GM12878 (cell line): ENCODE measurements at regions of chr10 and their contacts with region 1.

Region 1: GRCh38 chr10:48289501-48290238 is 15.2 kb upstream of the FRMPD2 start:
- DNase-seq: no peak
- ATAC-seq: peak; percentile 60
- H3K4me3 ChIP-seq: no peak overlapping the region
- H3K27ac ChIP-seq: no peak overlapping the region
- H3K4me1 ChIP-seq: peaks cover 34% of the 10 kb centered on the region
- H3K27me3 ChIP-seq: no peaks in the 10 kb centered on the region
- CTCF ChIP-seq: peak; percentile 80 to 91 (median 86)
- EP300 ChIP-seq: no peak
- POLR2A ChIP-seq: no peak
- RAD21 ChIP-seq: peak; percentile 86

Region 2: GRCh38 chr10:48215488-48216204 is 74.0 kb before region 1 on chr10:
- CTCF ChIA-PET with region 1: interaction called, 78 read pairs
- POLR2A ChIA-PET with region 1: interaction called, 5 read pairs
- RAD21 ChIA-PET with region 1: interaction called, 45 read pairs
- SMC1A ChIA-PET with region 1: interaction called, 49 read pairs
- in situ Hi-C with region 1: no loop called
- intact Hi-C with region 1: loop called (anchors 1 kb)
- DNase-seq: peak; percentile 49
- ATAC-seq: peak; percentile 94
- H3K4me3 ChIP-seq: no peak overlapping the region
- H3K27ac ChIP-seq: no peak overlapping the region
- H3K4me1 ChIP-seq: no peaks in the 10 kb centered on the region
- H3K27me3 ChIP-seq: no peaks in the 10 kb centered on the region
- CTCF ChIP-seq: peak; percentile 50 to 81 (median 78)
- EP300 ChIP-seq: no peak
- POLR2A ChIP-seq: no peak
- RAD21 ChIP-seq: peak; percentile 83

Region 3: GRCh38 chr10:48231699-48232315 is 57.9 kb before region 1 on chr10:
- CTCF ChIA-PET with region 1: interaction called, 9 read pairs
- POLR2A ChIA-PET with region 1: interaction called, 7 read pairs
- RAD21 ChIA-PET with region 1: interaction called, 11 read pairs
- SMC1A ChIA-PET with region 1: interaction called, 7 read pairs
- in situ Hi-C with region 1: no loop called
- intact Hi-C with region 1: no loop called
- DNase-seq: peak; percentile 64
- ATAC-seq: peak; percentile 89
- H3K4me3 ChIP-seq: 0 out of 2 replicates have a peak overlapping the region, but pooled peaks have one; percentile 25
- H3K27ac ChIP-seq: no peak overlapping the region
- H3K4me1 ChIP-seq: peaks cover 16% of the 10 kb centered on the region
- H3K27me3 ChIP-seq: no peaks in the 10 kb centered on the region
- CTCF ChIP-seq: no peak
- EP300 ChIP-seq: peak in 1 of 2 experiments; percentile 25; a peak in 1 of 4 replicates
- POLR2A ChIP-seq: no peak
- RAD21 ChIP-seq: no peak

Region 4: DNA sequence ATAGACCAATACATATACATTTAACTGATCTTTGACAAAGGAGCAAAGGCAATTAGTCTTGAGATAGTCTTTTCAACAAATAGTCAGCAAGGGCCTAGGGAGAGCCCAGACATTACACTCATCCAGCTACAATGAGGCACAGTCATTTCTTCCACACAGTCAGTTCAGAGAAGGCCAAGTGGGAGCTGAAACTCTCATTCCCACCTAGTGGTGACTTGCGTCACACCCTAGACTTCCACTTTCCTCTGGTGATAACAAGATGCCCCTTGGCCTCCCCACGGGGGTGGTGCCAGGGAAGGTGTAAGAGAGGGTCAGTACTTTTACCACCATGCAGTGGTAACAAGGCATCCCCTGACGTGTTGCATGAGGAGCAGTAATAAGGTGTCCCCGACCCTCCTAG is 23.1 kb before region 1 on chr10:
- CTCF ChIA-PET with region 1: interaction called, 10 read pairs
- POLR2A ChIA-PET with region 1: no interaction called
- RAD21 ChIA-PET with region 1: interaction called, 8 read pairs
- SMC1A ChIA-PET with region 1: interaction called, 23 read pairs
- in situ Hi-C with region 1: no loop called
- intact Hi-C with region 1: no loop called
- DNase-seq: no peak
- ATAC-seq: peak; percentile 91
- H3K4me3 ChIP-seq: no peak overlapping the region
- H3K27ac ChIP-seq: no peak overlapping the region
- H3K4me1 ChIP-seq: no peaks in the 10 kb centered on the region
- H3K27me3 ChIP-seq: no peaks in the 10 kb centered on the region
- CTCF ChIP-seq: 0 out of 6 replicates have a peak, but pooled peaks of 1 of the 3 experiments have one; percentile 7
- EP300 ChIP-seq: no peak
- POLR2A ChIP-seq: no peak
- RAD21 ChIP-seq: no peak

Region 5: DNA sequence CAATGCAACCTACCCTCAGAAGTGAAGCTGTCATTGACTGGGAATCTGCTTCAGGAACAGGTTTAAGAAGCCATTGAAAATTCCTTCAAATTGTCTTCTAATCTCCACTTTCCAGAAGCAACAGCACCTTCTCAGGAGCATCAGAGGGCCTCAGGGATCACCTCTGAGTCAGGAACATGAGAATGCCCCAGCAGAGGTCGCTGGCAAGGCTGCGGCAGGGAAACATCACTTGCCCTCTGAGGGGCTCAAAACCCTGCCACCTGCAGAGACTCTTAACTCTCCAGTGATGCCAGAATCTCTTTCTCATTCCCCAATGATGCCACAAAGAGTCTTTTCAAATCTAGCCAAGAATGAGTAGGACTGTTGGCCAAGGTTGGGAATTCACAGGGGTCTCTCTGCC is 10.9 kb after region 1 on chr10:
- CTCF ChIA-PET with region 1: interaction called, 87 read pairs
- POLR2A ChIA-PET with region 1: interaction called, 11 read pairs
- RAD21 ChIA-PET with region 1: interaction called, 31 read pairs
- SMC1A ChIA-PET with region 1: interaction called, 82 read pairs
- in situ Hi-C with region 1: no loop called
- intact Hi-C with region 1: loop called (anchors 2 kb)
- DNase-seq: no peak
- ATAC-seq: no peak
- H3K4me3 ChIP-seq: no peak overlapping the region
- H3K27ac ChIP-seq: no peak overlapping the region
- H3K4me1 ChIP-seq: peaks cover 8% of the 10 kb centered on the region; the same call in 1 of the 2 replicates
- H3K27me3 ChIP-seq: no peaks in the 10 kb centered on the region
- CTCF ChIP-seq: no peak
- EP300 ChIP-seq: no peak
- POLR2A ChIP-seq: no peak
- RAD21 ChIP-seq: no peak

Region 6: GRCh38 chr10:48314107-48314506 is 24.4 kb after region 1 on chr10:
- CTCF ChIA-PET with region 1: interaction called, 16 read pairs
- POLR2A ChIA-PET with region 1: interaction called, 4 read pairs
- RAD21 ChIA-PET with region 1: interaction called, 10 read pairs
- SMC1A ChIA-PET with region 1: interaction called, 33 read pairs
- in situ Hi-C with region 1: no loop called
- intact Hi-C with region 1: no loop called
- DNase-seq: no peak
- ATAC-seq: no peak
- H3K4me3 ChIP-seq: no peak overlapping the region
- H3K27ac ChIP-seq: no peak overlapping the region
- H3K4me1 ChIP-seq: peaks cover 6% of the 10 kb centered on the region
- H3K27me3 ChIP-seq: no peaks in the 10 kb centered on the region
- CTCF ChIP-seq: no peak
- EP300 ChIP-seq: no peak
- POLR2A ChIP-seq: no peak
- RAD21 ChIP-seq: no peak

Region 7: GRCh38 chr10:48649349-48649944 is 359.8 kb after region 1 on chr10:
- CTCF ChIA-PET with region 1: no interaction called
- POLR2A ChIA-PET with region 1: no interaction called
- RAD21 ChIA-PET with region 1: no interaction called
- SMC1A ChIA-PET with region 1: no interaction called
- in situ Hi-C with region 1: no loop called
- intact Hi-C with region 1: no loop called
- DNase-seq: no peak
- ATAC-seq: peak; percentile 36; the same call in 2 of the 3 replicates
- H3K4me3 ChIP-seq: no peak overlapping the region
- H3K27ac ChIP-seq: no peak overlapping the region
- H3K4me1 ChIP-seq: peaks cover 7% of the 10 kb centered on the region; the same call in 1 of the 2 replicates
- H3K27me3 ChIP-seq: no peaks in the 10 kb centered on the region
- CTCF ChIP-seq: peak; percentile 3 to 24 (median 23); a peak in 2 of 6 replicates
- EP300 ChIP-seq: no peak
- POLR2A ChIP-seq: no peak
- RAD21 ChIP-seq: no peak